ENCODE measurements at regions of chr2 and their contacts with region 1.

Region 1: GRCh38 chr2:239035361-239036078 is 187.6 kb downstream of the TWIST2 start:
- DNase-seq: peak; percentile 75
- ATAC-seq: peak; percentile 92

Region 2: GRCh38 chr2:238916875-238917590 is 118.5 kb before region 1 on chr2:
- intact Hi-C with region 1: no loop called
- DNase-seq: no peak
- ATAC-seq: no peak

Region 3: DNA sequence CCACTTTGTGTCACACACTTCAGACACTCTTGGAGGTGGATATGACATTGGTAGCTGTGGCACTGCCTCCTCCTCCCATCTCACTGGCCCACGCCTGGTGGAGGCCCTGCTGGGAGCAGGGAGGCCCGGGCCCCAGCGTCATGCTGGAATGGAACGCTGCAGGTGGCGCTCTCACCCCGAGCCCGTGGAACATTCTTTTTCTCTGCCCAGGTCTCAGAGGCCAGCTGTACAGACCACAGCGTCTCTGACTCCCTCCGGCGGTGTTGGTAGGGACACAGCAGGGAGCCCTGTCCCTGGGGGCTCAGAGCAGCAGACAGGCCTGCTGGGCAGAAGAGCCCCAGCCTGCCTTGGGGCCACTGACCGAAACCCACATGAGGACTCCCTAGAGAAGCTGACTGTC is 30.4 kb after region 1 on chr2:
- intact Hi-C with region 1: no loop called
- DNase-seq: no peak
- ATAC-seq: no peak

Region 4: DNA sequence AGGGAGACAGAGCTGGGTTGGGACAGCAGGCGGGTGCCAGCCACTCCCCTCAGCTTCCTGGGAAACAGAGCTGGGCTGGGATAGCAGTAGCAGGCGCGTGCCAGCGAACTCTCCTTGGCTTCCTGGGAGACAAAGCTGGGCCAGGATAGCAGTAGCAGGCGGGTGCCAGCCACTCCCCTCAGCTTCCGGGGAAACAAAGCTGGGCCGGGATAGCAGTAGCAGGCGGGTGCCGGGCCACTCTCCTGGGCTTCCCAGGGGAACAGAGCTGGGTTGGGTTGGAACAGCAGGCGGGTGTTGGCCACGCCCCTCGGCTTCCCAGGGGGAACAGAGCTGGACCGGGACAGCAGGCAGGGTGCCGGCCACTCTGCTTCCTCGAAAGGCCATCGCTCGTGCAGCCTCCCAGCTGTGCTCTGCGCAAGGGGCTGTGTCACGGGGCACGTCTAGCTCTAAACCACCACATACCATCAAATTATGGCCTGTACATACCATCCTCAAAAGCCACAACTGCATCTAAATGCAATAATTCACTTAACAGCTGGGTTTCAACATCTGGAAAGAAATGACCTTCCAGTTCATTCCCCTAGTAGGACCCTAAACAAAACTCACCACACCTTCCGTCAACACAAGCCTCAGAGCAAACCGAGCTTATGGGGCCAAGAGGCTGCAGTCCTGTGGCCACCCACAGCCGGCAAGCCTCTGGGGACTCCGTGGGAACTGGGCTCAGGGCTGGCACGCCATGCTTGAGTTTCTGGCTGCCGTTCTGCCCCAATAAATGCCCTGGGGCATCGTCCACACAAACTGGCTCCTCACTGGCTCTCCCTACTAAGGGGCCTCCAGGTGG is 40.6 kb after region 1 on chr2:
- intact Hi-C with region 1: no loop called
- DNase-seq: peak; percentile 56
- ATAC-seq: peak; percentile 47

Region 5: GRCh38 chr2:239106314-239106908 is 70.9 kb after region 1 on chr2:
- intact Hi-C with region 1: loop called (anchors 10 kb)
- DNase-seq: peak; percentile 75
- ATAC-seq: peak; percentile 76

Region 6: DNA sequence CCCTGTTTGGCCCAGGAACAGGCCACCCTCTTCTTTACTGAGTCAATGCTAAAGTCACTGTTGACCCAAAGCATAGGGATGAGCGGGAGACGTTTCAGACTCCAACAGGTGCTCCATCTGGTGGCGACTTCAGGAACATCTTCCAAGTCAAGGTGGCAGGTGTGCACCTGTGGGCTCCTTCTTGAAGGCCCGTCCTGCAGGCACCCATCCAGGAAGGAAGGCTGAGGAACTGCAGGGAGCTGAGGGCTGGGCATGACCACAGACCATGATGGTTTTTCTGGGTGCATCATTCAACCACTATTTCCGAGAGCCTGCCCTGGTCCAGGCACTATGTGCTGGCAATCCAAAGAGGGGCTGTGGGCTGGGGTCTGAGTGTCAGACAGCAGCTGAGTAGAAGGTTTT is 846.8 kb after region 1 on chr2:
- intact Hi-C with region 1: loop called (anchors 10 kb)
- DNase-seq: peak; percentile 54
- ATAC-seq: peak; percentile 75

Region 7: DNA sequence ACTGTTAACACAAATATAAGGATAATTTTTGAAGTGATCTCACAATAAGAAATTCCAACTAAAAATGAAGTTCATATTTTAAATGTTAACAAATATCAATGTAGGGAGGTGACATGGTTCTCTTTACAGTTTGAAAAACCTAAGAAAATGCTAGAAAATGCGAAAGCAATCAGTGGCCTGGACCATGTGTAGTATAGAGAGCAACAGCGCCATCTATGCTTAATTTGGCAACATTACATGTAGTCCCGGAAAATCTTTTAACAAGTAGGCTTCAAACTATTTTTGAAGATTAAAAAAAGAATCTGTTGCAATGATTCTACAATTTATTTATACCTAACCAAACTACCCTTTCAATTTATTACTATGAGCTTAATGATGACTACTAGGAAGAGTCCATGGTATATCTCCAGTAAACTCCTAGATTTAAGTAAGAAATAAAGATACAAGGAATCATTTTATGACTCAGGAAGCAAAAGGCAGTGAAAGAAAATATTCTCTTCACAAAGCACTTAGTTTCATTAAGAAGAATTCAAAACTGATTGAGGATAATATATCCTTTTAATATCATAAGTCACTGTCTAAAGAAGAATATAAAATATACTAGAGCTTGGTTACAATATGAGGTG is 956.3 kb after region 1 on chr2:
- intact Hi-C with region 1: loop called (anchors 10 kb)
- DNase-seq: no peak
- ATAC-seq: peak; percentile 71

Measured in Right ventricle myocardium superior (tissue), 1 donor.